ENCODE measurements at regions of chr7 and their contacts with region 1.

Region 1: GRCh38 chr7:71408271-71408670 is 276.3 kb downstream of the GALNT17 start:
- DNase-seq: peak; percentile 70
- ATAC-seq: peak; percentile 93

Region 2: DNA sequence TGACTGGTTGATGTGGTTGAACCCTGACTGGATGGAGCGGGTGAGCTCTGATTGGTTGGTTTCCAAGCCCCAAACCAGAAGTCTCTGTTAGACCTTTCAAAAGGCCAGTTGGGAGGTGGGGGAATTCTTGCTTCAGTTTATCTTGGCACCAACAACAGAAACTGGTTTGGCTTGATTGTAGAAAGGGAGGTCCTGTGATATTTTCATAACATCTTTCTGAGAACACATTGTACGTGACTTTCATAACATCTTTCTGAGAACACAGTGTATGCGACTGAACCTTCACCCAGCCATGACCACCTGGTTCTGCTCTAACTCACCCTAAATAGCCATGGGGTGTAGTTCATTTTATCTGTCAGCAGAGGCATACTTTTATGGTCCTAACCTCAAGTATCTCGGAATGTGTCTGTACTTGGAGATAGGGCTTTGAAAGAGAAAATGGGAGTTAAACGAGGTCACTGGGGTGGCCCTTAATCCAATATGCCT is 188.0 kb before region 1 on chr7:
- intact Hi-C with region 1: loop called (anchors 5 kb)
- DNase-seq: no peak
- ATAC-seq: peak; percentile 93

Region 3: DNA sequence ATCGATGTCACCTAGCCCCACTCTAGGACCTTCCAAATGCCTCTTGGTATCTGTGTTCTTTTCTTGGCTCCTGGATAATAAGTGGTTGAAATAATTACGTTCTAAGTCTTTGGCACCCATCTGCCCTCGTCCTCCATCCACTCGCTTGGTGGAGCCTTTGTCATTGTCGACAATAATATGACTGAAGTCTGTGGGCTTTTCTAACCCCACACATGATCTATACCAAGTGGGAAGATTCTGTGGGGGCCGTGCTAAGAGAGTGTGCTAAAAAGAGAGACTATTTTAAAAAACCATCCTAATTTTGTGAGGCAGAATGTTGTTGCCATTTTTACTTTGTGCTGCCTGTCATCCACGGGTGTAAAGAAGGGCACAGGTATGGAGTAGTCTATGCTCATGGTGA is 163.2 kb before region 1 on chr7:
- intact Hi-C with region 1: no loop called
- DNase-seq: no peak
- ATAC-seq: peak; percentile 21

Region 4: DNA sequence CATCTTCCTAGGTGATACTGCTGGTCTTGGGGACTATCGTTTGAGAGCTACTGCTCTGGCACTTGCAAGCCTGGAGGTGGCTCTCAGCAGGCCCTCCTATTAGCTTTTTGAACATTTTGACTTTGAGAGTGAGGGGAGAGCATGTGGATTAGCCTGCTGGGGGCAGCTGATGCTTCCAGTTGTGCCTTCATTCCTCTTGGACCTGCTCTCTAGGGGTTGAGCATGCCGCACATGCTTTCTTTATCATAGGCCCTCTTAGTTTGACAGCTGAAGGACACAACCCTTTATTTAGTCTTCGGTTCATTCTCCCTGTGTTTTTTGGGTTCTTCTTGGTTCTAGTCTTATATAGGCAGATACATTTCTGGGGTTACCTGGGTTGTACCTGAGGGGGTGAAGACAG is 144.3 kb before region 1 on chr7:
- intact Hi-C with region 1: loop called (anchors 5 kb)
- DNase-seq: no peak
- ATAC-seq: peak; percentile 81

Region 5: GRCh38 chr7:71424166-71425035 is 16.1 kb after region 1 on chr7:
- intact Hi-C with region 1: no loop called
- DNase-seq: no peak
- ATAC-seq: no peak

Region 6: DNA sequence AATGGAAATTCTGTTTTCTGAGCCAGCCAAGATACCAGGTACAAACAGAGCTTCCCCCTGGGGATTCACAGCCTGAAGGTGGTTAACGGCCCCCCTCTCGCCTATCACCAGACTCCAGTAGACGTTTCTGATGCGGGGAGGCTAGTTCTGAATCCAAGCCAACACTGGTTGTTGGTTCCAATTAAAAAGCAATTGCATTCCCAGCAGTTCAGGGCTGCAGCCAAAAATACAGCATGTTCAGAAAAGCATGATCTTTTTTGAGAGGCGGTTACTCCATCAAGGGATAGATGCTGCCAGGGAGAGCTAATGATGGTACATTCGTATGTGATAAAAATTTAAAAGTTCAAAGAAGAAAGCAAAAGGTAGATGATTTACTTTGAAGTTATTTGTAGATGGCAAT is 204.6 kb after region 1 on chr7:
- intact Hi-C with region 1: loop called (anchors 5 kb)
- DNase-seq: no peak
- ATAC-seq: peak; percentile 58

Measured in Right ventricle myocardium inferior (tissue), 1 donor.